Naive thymus-derived CD4-positive, alpha-beta T cell (primary cell): ENCODE measurements at regions of chr4 and their contacts with region 1.

Region 1: DNA sequence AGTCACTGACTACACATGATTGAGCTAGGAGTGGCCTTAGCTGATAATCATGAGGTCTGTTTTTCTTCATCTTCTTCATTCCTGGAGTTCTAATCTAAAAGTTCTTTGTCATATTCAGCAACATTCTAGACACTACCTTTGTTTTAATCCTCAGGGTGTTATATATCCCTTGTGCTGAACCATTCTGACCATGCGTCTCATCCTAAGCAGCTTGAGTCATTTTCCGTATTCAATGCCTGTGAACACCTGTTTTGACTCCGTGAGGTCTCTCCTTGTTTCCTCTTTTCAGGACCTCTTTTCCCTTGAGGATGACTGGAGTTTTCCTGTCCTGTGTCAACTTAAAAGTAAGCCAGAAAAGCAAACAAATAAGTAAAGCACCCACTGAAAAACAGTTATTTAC is 597.9 kb downstream of the GBA3 start:
- DNase-seq: no peak
- ATAC-seq: no peak
- H3K4me3 ChIP-seq: no peak overlapping the region
- H3K4me3 Mint-ChIP-seq: peak overlapping the region in 1 of 10 donors; percentile 82
- H3K27ac ChIP-seq: no peak overlapping the region
- H3K27ac Mint-ChIP-seq: no peak overlapping the region
- H3K4me1 ChIP-seq: no peaks in the 10 kb centered on the region
- H3K4me1 Mint-ChIP-seq: peaks cover 0 to 19% (median 6%) of the 10 kb centered on the region in 7 donors
- H3K27me3 ChIP-seq: no peaks in the 10 kb centered on the region
- H3K27me3 Mint-ChIP-seq: peaks cover 0 to 18% (median 0%) of the 10 kb centered on the region in 5 donors

Region 2: DNA sequence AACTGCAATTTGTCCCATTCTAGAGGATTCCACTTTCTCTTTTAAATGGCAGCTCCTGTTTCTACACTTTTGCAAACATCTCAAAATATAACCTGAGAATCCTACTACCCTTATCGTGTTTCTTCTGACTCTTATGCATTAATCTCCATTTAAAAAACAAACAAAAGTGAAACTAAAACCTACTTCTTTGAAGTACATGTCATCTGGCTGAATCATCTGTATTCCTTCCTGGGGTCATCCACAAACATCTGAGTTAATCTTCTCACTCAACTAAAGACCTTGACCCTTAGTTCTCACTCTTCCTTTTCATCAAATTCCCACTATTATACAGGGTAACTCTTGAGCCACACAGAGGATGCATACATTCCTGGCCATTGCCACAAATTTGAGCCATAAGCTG is 14.4 kb after region 1 on chr4:
- CTCF ChIA-PET with region 1: no interaction called
- POLR2A ChIA-PET with region 1: no interaction called
- intact Hi-C with region 1: loop called in 1 of 2 experiments (anchors 1 kb)
- DNase-seq: no peak
- ATAC-seq: no peak
- H3K4me3 ChIP-seq: no peak overlapping the region
- H3K4me3 Mint-ChIP-seq: no peak overlapping the region
- H3K27ac ChIP-seq: no peak overlapping the region
- H3K27ac Mint-ChIP-seq: no peak overlapping the region
- H3K4me1 ChIP-seq: no peaks in the 10 kb centered on the region
- H3K4me1 Mint-ChIP-seq: peaks cover 5 to 16% (median 9%) of the 10 kb centered on the region in 7 donors
- H3K27me3 ChIP-seq: no peaks in the 10 kb centered on the region
- H3K27me3 Mint-ChIP-seq: no peaks in the 10 kb centered on the region